CD4-positive, alpha-beta memory T cell (primary cell): ENCODE measurements at regions of chr20 and their contacts with region 1.

Region 1: GRCh38 chr20:44866703-44867335 is 18.7 kb upstream of the YWHAB start:
- DNase-seq: no peak
- H3K4me3 ChIP-seq: no peak overlapping the region
- H3K4me3 Mint-ChIP-seq: peak overlapping the region in 7 of 8 donors; percentile 57 to 82 (median 74)
- H3K27ac ChIP-seq: no peak overlapping the region
- H3K27ac Mint-ChIP-seq: peak overlapping the region in 2 of 7 donors; percentile 29 to 65
- H3K4me1 ChIP-seq: peaks cover 4% of the 10 kb centered on the region
- H3K4me1 Mint-ChIP-seq: peaks cover 3 to 10% (median 9%) of the 10 kb centered on the region in 4 donors
- H3K27me3 ChIP-seq: peaks cover 3% of the 10 kb centered on the region
- H3K27me3 Mint-ChIP-seq: peaks cover 5 to 6% of the 10 kb centered on the region in 2 donors

Region 2: DNA sequence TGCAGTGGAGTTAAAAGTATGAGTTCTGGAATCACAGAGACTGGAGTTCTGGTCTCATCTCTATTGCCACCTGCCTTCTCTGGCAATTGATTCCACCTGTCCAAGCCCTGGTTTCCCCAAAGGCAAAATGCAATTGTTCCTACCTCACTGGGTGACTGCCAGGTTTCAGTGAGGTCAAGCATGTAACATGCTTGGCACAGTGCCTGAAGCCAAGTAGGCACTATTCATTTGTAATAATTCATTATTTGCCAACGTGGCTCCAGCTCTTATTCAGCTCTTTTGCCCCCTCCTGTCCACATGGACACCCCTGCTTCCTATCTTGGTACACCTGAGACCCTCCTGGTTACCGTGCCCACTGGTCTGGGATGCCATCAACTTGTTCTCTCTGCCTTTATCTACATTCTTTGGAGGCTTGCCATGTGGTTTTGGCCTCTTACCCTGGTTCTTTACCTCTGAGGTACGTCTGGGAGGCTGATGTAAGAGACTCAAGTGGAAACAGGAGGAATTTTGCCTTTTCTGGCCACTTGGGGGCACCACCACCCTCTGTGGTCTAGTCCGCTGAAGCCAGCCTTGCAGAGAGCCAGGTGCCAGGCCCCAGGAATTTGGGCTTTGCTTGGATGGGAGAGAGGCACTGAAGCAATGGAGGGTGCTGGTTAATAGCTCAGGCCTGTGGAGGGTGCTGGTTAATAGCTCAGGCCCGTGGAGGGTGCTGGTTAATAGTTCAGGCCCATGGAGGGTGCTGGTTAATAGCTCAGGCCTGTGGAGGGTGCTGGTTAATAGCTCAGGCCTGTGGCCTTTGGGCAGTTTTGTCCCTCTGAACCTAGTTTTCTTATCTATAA is 119.4 kb before region 1 on chr20:
- CTCF ChIA-PET with region 1: interaction called, 16 read pairs
- POLR2A ChIA-PET with region 1: no interaction called
- intact Hi-C with region 1: loop called (anchors 1 kb)
- DNase-seq: peak; percentile 27 to 57 (median 43)
- H3K4me3 ChIP-seq: no peak overlapping the region
- H3K4me3 Mint-ChIP-seq: peak overlapping the region in 6 of 8 donors; percentile 34 to 58 (median 47)
- H3K27ac ChIP-seq: no peak overlapping the region
- H3K27ac Mint-ChIP-seq: no peak overlapping the region
- H3K4me1 ChIP-seq: peaks cover 5% of the 10 kb centered on the region
- H3K4me1 Mint-ChIP-seq: peaks cover 7 to 13% (median 11%) of the 10 kb centered on the region in 4 donors
- H3K27me3 ChIP-seq: peaks cover 11% of the 10 kb centered on the region
- H3K27me3 Mint-ChIP-seq: peaks cover 12 to 19% of the 10 kb centered on the region in 2 donors

Region 3: GRCh38 chr20:44946271-44946852 is 79.5 kb after region 1 on chr20:
- CTCF ChIA-PET with region 1: no interaction called
- POLR2A ChIA-PET with region 1: no interaction called
- intact Hi-C with region 1: no loop called
- DNase-seq: no peak
- H3K4me3 ChIP-seq: no peak overlapping the region
- H3K4me3 Mint-ChIP-seq: no peak overlapping the region
- H3K27ac ChIP-seq: no peak overlapping the region
- H3K27ac Mint-ChIP-seq: peak overlapping the region in 3 of 7 donors; percentile 31 to 76 (median 76)
- H3K4me1 ChIP-seq: no peaks in the 10 kb centered on the region
- H3K4me1 Mint-ChIP-seq: peaks cover 0 to 7% (median 3%) of the 10 kb centered on the region in 4 donors
- H3K27me3 ChIP-seq: no peaks in the 10 kb centered on the region
- H3K27me3 Mint-ChIP-seq: no peaks in the 10 kb centered on the region